Activated T-helper 1 cell treated with anti-CD3 and anti-CD28 coated beads, Interleukin-12 subunit alpha, Interleukin-12 subunit beta, Interleukin-2, Interleukin-4 antibody, amounts not matched to agents 30 ng/mL and 10 ng/mL and 1 ng/mL, durations not matched to agents 14 hours and 24 hours and 36 hours (primary cell): ENCODE measurements at regions of chr17 and their contacts with region 1.

Region 1: DNA sequence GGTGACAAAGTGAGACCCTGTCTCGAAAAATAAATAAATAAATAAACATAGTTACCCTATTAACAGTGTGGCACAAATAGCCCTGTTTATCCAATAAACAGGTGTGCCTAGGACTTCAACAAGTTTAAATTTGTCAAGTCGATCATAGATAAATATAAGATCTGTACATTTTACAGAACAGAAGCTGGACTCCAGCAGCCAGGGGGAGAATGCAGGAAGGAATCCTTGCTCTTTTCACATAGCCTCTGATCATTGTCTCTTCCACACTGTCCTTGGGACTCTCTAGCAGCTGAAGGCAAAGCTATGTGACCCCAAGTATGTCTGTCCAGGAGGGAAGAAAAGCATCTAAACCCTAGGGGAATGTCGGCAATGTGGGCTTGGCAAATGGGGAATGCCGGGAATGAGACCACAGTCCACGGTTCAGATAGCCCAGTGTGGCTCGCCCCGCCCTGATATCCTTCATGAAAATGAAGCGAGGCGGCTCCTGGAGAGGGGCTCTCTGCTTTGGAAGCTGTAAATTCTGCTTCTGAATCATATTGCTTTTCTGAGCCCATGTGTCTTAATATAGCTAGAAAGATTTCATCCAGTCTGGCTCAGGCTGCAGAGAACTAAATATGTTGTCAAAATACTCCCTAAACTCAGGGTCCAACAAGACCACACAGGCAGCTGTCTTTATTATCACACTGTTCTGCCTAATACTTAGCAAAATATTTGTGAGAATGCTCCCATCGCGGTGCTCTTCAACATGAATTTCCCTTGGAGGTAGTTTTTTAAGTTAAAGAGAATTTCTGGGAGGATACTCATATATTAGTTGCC is 24.9 kb upstream of the GRB2 start:
- DNase-seq: no peak
- H3K4me3 Mint-ChIP-seq: no peak overlapping the region
- H3K27ac Mint-ChIP-seq: no peak overlapping the region
- H3K4me1 Mint-ChIP-seq: peaks cover 9% of the 10 kb centered on the region
- H3K27me3 Mint-ChIP-seq: peaks cover 20% of the 10 kb centered on the region

Region 2: DNA sequence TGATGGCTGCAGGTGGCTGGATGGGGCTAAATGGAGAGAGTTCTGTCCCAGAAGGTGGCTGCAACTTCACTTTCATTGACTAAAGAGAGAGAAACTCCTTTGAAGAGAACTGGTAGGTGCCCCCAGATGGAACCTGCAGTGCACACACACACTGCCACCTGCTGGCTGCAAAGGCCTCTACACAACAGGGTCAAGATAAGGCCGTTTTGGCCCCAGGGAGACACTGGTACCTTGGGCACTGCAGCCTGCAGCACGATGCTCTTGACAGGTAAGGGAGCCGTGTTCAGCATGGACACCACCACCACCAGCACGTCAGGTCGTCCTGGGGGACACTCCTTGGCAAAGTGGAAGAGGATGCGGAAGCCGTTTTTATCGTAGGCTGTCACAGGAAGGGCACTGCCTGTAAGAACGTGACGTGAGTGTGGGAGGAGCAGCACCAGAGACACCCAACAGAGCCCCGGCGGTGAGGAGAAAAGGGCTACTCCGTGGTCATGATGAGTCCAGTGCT is 191.6 kb before region 1 on chr17:
- intact Hi-C with region 1: no loop called
- DNase-seq: peak; percentile 35
- H3K4me3 Mint-ChIP-seq: peak overlapping the region; percentile 38
- H3K27ac Mint-ChIP-seq: peak overlapping the region; percentile 76
- H3K4me1 Mint-ChIP-seq: peaks cover 35% of the 10 kb centered on the region
- H3K27me3 Mint-ChIP-seq: no peaks in the 10 kb centered on the region

Region 3: GRCh38 chr17:75456417-75457046 is 26.2 kb after region 1 on chr17 and contains the start of gene TMEM94:
- intact Hi-C with region 1: loop called (anchors 1 kb)
- DNase-seq: peak; percentile 89
- H3K4me3 Mint-ChIP-seq: peak within 1 kb of the TSS; percentile 92
- H3K27ac Mint-ChIP-seq: peak within 1 kb of the TSS; percentile 84
- H3K4me1 Mint-ChIP-seq: peaks cover 35% of the 10 kb centered on the region
- H3K27me3 Mint-ChIP-seq: no peaks in the 10 kb centered on the region
- total RNA-seq, gene TMEM94: 67.0 and 70.4 TPM in 2 replicates

Region 4: DNA sequence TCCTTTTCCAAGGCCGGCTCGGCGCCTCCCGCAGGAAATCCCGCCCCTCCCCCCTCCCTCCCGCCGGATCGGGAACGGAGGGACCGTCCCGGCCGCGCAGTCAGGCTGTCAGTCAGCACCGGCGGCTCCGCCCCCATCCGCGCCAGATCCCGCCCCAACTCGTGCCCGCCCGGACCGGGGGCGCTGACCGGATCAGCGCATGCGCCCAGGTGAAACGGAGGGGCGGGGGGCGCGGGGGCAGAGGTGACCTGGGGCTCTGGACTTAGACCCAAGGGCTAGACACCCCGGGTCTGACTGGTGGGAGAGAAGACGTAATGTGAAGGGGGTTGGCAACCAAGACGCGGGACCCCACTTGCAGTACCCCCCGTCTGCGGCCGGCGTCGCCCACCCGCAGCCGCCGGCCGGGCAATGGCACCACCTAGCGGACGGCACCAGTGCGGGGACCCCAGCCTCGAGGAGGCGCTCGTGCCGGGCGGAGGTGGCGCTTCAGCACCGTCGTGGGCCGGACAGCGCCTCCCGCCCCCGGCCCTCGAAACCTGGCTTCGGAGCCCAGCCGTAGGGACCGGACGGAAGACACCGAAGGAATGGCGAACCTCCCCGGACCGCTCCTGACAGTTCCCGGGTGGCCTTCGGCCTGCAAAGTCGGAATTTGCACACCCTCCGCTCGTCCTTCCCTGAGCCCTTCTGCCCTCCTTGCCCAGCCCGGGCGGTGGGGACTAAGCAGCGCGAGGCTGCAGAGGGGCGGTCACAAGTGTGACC is 85.3 kb after region 1 on chr17 and contains the start of gene CASKIN2:
- intact Hi-C with region 1: loop called (anchors 1 kb)
- DNase-seq: peak; percentile 62
- H3K4me3 Mint-ChIP-seq: peak within 1 kb of the TSS; percentile 78
- H3K27ac Mint-ChIP-seq: no peak within 1 kb of the TSS
- H3K4me1 Mint-ChIP-seq: peaks cover 18% of the 10 kb centered on the region
- H3K27me3 Mint-ChIP-seq: peaks cover 17% of the 10 kb centered on the region
- total RNA-seq, gene CASKIN2: 0.88 and 2.0 TPM in 2 replicates

Region 5: DNA sequence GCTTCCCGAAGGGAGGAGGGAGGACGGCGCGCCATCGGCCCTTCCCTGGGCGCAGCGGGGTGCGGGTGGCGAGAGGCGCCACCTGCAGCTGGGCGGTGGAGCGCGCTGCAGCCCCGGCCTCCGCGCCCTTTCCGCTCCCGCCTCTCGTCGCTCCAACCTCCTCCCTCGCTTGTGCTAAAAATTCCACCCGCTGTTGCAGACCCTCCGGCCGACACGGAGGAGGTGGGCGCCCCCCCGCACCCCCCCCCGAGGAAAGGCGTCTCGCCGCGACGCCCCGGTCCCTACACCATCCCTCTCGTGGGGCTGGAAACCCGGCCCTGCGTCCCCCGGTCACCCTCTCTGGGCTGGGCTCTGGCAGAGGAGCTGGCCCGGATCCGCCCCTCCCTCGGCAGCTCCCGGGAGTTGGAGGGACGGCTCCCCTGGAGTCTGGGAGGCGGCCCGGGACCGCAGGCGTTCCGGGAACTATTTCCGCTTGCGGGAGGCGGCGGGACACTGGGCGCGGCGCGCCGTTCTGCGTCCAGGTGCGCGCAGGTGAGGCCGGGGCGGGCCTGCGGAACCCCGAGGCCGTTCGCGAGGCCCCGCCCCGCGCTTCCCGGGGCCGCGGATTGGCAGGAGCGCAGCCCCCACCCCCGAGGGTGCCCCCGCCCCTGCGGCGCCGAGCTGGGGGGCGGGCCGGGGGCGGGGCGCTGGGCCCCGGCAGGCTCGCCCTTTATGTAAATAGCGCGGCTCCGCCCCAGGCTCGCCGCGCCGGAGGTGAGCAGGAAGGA is 94.8 kb after region 1 on chr17 and contains the start of gene LLGL2:
- intact Hi-C with region 1: loop called (anchors 2 kb)
- DNase-seq: peak; percentile 81
- H3K4me3 Mint-ChIP-seq: peak within 1 kb of the TSS; percentile 69
- H3K27ac Mint-ChIP-seq: no peak within 1 kb of the TSS
- H3K4me1 Mint-ChIP-seq: peaks cover 6% of the 10 kb centered on the region
- H3K27me3 Mint-ChIP-seq: peaks cover 10% of the 10 kb centered on the region
- total RNA-seq, gene LLGL2: 7.1 and 8.2 TPM in 2 replicates

Region 6: DNA sequence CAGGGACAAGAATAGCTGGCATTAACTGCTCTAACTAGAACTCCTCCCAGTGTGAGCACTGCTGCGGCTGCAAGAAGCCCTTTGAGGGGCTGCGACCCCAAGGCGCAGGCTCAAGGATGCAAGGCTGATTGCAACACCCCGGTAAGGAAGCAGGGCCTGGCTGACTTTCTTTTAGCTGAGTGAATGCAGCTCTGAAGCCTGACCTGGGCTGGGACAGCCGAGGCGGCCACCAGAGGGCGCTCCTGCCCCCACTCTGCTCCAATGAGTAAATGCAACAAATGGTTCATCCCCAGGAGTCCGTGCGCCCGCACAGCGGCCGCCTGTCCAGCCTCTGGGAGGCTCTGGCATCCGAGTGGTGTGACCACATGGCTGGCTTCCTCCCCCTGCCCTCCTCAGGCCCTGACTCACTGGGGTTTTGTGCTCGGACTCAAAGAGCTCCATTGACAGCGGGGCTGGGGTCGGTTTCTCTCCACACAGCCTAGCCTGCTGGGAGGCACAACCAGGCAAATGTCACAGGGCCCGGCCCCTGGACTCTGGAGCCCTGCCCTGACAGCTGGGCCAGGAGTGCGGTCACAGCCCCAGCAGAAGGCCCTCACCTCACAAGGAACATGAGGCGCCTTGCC is 202.6 kb after region 1 on chr17 and contains the start of gene SMIM5:
- intact Hi-C with region 1: loop called (anchors 1 kb)
- DNase-seq: peak; percentile 77
- H3K4me3 Mint-ChIP-seq: no peak within 1 kb of the TSS
- H3K27ac Mint-ChIP-seq: no peak within 1 kb of the TSS
- H3K4me1 Mint-ChIP-seq: no peaks in the 10 kb centered on the region
- H3K27me3 Mint-ChIP-seq: no peaks in the 10 kb centered on the region
- total RNA-seq, gene SMIM5: 0.05 TPM in 1 of 2 replicates, not detected in the other

Region 7: DNA sequence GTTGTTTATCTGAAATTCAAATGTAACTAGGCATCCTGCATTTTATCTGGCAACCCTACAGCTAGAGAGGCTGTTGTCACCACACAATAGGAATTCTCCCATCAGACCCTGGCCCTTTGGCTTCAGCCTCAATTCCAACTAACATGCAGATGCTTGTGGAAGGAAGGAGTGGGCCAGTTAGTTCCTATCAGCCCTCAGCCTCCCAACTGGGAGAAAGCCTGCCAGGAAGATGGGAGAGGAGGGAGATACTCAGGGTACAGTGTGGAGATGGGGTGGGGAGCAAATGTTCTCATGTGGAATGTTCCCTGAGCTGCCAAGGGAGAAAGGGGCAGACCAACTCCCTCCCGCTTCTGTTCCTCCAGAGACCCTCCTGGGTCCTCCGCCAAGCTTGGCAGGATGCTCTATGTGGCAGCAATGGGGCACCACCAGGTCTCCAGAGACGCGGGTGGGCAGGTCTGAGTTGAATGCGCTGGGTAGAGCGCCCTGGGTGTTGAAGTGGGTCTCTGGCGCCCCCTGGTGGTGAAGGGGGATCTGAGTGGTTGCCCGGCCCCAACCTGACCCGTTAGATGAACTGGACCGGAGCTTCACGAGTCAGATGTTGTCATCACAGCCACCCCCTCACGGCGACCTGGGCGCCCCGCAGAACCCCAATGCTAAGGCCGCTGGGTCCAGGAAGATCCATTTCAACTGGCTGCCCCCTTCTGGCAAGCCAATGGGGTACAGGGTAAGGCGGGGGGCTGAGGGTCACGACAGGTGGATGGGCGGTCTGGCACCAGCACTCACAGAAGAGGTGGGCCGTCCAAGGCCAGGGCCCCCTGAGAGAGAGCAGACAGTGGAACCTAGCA is 319.4 kb after region 1 on chr17:
- intact Hi-C with region 1: loop called (anchors 2 kb)
- DNase-seq: peak; percentile 77
- H3K4me3 Mint-ChIP-seq: no peak overlapping the region
- H3K27ac Mint-ChIP-seq: no peak overlapping the region
- H3K4me1 Mint-ChIP-seq: peaks cover 16% of the 10 kb centered on the region
- H3K27me3 Mint-ChIP-seq: peaks cover 12% of the 10 kb centered on the region